HepG2 (cell line): ENCODE measurements at regions of chr9 and their contacts with region 1.

Region 1: GRCh38 chr9:38362852-38363593 is 29.5 kb upstream of the ALDH1B1 start:
- DNase-seq: peak; percentile 49
- ATAC-seq: peak; percentile 29
- H3K4me3 ChIP-seq: no peak overlapping the region
- H3K27ac ChIP-seq: no peak overlapping the region
- H3K4me1 ChIP-seq: peaks cover 28% of the 10 kb centered on the region
- H3K27me3 ChIP-seq: no peaks in the 10 kb centered on the region
- CTCF ChIP-seq: peak; percentile 81
- EP300 ChIP-seq: no peak
- POLR2A ChIP-seq: no peak
- RAD21 ChIP-seq: 0 out of 2 replicates have a peak, but pooled peaks have one; percentile 41

Region 2: DNA sequence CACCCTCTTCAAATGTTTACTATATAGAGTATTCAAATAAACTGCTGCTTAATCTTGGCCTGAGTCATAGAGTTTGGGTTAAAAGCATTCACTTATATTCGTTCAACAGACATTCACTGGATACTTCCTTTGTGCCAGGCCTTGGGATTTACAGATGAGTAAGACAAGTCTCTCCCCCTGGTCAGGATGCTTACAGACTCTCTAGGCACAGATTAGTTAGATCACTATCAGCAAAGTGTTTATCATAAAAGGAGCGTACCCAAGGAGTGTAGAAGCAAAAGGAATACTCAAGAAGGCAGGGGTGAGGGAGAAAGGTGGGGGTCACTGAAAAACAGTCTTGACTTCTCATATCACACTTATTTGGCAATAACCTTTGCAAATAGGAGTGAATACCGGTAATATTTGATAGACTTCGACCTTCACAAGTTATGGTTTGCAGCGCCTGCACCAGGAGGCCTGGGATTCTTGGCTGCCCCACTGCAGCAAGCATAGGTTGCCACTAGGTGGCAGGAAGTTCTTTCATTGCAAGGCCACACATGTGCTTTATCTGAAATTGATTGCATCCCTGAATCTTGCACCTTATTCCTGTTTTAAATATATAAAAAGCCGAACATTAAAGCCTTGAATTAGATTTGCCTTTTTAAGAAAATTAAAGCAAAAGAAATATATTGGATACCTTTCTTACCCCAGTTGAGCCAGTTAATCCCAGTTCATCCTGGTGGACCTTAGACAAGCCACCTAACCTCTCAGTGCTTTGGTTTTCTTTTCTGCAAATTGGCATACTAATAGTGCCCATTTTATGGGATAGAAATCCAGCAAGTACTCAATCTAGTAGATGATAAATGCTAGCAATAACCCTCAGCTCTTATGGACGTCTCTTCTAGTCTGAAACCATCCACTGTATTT is 615.9 kb before region 1 on chr9:
- CTCF ChIA-PET with region 1: no interaction called
- POLR2A ChIA-PET with region 1: no interaction called
- in situ Hi-C with region 1: loop called (anchors 10 kb)
- intact Hi-C with region 1: no loop called
- DNase-seq: peak; percentile 53
- ATAC-seq: peak; percentile 87
- H3K4me3 ChIP-seq: no peak overlapping the region; a peak in 1 of 6 replicates
- H3K27ac ChIP-seq: no peak overlapping the region
- H3K4me1 ChIP-seq: peaks cover 13% of the 10 kb centered on the region
- H3K27me3 ChIP-seq: peaks cover 5 to 29% of the 10 kb centered on the region in 2 experiments
- CTCF ChIP-seq: peak; percentile 83
- EP300 ChIP-seq: no peak
- POLR2A ChIP-seq: no peak
- RAD21 ChIP-seq: peak; percentile 50; the same call in 1 of the 2 replicates

Region 3: DNA sequence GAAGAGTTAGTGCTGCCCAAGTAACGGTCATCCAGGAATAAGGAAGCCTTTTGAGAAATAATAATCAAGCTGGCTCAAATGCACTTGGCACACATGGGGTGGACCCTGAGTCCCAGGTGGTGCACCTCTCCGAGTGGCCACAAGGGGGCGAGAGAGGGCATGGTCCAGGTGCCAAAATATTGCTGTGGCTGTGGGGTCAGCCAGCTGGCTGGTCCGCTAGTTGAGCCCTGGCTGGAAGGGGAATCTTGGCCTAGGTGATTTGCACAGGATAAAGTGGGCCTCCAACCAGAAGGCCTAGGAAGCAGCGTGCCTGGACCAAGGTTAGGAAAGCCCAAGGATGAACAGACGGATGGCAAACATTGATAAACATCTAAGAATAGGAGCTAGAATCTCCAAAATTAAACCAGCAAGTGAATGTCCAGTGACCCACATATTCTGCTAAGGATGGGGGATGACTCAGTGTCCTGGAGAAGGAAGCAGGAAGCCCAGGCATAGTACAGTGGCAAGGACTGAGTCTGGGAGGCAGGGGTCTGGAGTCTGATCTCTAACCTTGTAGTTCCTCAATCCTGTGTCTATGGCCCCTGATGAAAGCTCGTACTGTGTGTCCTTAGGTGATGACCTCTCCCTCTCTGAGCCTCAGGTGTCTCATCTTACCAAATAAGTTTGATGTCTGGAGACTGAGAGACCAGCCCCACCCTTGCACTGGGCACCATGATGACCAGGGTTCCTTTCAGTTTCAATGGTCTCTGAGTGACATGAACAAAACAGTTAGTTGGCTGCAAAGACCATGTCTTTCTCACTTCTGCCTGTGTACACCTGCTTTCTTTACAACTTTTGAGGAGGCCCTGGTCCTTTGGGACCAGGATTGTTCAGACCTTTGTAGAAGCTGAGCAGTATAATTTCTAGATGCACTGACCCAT is 274.8 kb before region 1 on chr9:
- CTCF ChIA-PET with region 1: no interaction called
- POLR2A ChIA-PET with region 1: no interaction called
- in situ Hi-C with region 1: no loop called
- intact Hi-C with region 1: loop called (anchors 1 kb)
- DNase-seq: peak; percentile 39
- ATAC-seq: peak; percentile 88
- H3K4me3 ChIP-seq: no peak overlapping the region
- H3K27ac ChIP-seq: no peak overlapping the region
- H3K4me1 ChIP-seq: no peaks in the 10 kb centered on the region; the same call in 1 of the 2 replicates
- H3K27me3 ChIP-seq: peaks cover 4 to 31% of the 10 kb centered on the region in 2 experiments; a peak in 3 of 5 replicates
- CTCF ChIP-seq: peak; percentile 91
- EP300 ChIP-seq: no peak
- POLR2A ChIP-seq: no peak
- RAD21 ChIP-seq: peak; percentile 49; the same call in 1 of the 2 replicates

Region 4: GRCh38 chr9:38334234-38334633 is 28.8 kb before region 1 on chr9:
- CTCF ChIA-PET with region 1: no interaction called
- POLR2A ChIA-PET with region 1: no interaction called
- in situ Hi-C with region 1: no loop called
- intact Hi-C with region 1: loop called (anchors 1 kb)
- DNase-seq: peak; percentile 31
- ATAC-seq: peak; percentile 75
- H3K4me3 ChIP-seq: no peak overlapping the region
- H3K27ac ChIP-seq: no peak overlapping the region
- H3K4me1 ChIP-seq: peaks cover 11% of the 10 kb centered on the region; the same call in 1 of the 2 replicates
- H3K27me3 ChIP-seq: peaks cover 1 to 20% of the 10 kb centered on the region in 2 experiments; a peak in 2 of 5 replicates
- CTCF ChIP-seq: peak; percentile 71
- EP300 ChIP-seq: no peak
- POLR2A ChIP-seq: no peak
- RAD21 ChIP-seq: peak; percentile 50

Region 5: GRCh38 chr9:38405785-38406184 is 42.8 kb after region 1 on chr9:
- CTCF ChIA-PET with region 1: interaction called, 5 read pairs
- POLR2A ChIA-PET with region 1: no interaction called
- in situ Hi-C with region 1: loop called (anchors 5 kb)
- intact Hi-C with region 1: no loop called
- DNase-seq: no peak
- ATAC-seq: no peak
- H3K4me3 ChIP-seq: no peak overlapping the region
- H3K27ac ChIP-seq: no peak overlapping the region
- H3K4me1 ChIP-seq: peaks cover 14% of the 10 kb centered on the region
- H3K27me3 ChIP-seq: peaks cover 8 to 34% of the 10 kb centered on the region in 2 experiments; a peak in 4 of 5 replicates
- CTCF ChIP-seq: no peak
- EP300 ChIP-seq: no peak
- POLR2A ChIP-seq: no peak
- RAD21 ChIP-seq: no peak